H1 (cell line): ENCODE measurements at regions of chr4 and their contacts with region 1.

Region 1: DNA sequence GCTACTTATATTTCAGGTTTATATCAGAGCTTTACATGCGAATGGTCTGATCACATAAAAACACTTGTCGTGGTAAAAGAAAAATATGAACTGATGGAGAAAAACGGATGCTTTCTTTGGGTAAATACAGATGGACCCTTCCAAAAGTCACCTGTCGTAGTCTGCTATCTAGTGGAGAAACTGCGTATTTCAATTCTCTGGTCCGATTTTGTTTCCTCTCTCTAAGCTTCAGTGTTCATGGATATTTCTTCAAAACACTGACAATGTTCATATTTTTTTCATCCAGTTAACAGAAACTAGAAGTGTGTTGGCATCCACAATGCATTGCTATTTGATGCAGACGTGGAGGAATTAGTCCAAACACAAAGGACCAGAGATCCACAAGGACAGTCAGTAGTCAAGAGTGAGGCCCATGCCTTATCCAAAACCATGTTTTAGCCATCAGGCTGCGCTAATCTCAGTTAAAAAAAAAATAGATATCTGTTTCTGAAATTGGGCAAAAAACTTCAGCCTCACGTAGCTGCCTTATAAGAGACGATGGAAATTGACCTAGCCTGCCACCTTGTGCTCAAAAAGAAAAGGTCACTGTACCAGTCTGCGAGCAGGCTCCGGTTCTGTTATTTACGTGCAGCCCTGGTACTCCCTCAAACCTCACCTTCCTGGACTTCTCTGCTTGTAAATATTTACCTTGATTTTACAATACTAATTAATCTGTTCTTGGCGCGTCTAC is 16.0 kb downstream of the MEPE start:
- DNase-seq: no peak
- H3K4me3 ChIP-seq: peak overlapping the region in 1 of 4 experiments; percentile 46; a peak in 2 of 8 replicates
- H3K27ac ChIP-seq: no peak overlapping the region
- H3K4me1 ChIP-seq: peaks cover 0 to 12% (median 6%) of the 10 kb centered on the region in 4 experiments; a peak in 6 of 7 replicates
- H3K27me3 ChIP-seq: no peaks in the 10 kb centered on the region
- CTCF ChIP-seq: peak; percentile 38 to 69 (median 67)
- EP300 ChIP-seq: no peak
- POLR2A ChIP-seq: no peak
- RAD21 ChIP-seq: peak; percentile 77 to 82

Region 2: DNA sequence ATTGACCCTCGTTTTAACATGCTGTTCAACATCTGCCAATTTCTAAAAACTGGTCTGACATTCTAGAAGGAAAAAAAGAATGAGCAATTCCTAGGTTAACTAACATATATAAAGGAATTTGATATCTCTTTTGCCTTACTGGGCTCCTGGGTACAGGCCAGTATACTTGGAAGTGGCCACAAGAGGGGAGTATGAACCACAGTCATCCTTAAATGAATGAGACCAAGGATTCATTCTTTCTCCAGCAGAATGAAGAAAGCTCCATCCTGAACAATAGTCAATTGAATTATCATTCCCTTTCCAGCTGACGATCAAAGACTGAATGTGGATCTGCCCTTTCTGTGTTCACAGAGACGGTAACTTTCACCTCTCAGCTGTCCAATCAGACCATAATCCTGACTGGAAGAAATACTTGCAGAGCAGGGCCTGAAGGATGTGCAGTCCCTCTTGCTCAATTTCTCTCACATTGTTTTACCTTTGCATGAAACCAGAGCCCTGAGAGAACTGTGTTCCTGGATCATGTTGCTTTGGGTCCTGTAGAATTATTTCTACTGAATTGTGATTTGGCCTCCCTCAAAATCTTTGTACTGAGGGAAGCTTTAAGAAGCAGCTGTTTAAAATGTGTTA is 304.8 kb before region 1 on chr4:
- CTCF ChIA-PET with region 1: interaction called, 49 read pairs
- POLR2A ChIA-PET with region 1: no interaction called
- DNase-seq: no peak
- H3K4me3 ChIP-seq: no peak overlapping the region
- H3K27ac ChIP-seq: no peak overlapping the region
- H3K4me1 ChIP-seq: peaks cover 0 to 2% (median under 1%) of the 10 kb centered on the region in 4 experiments; a peak in 2 of 7 replicates
- H3K27me3 ChIP-seq: no peaks in the 10 kb centered on the region
- CTCF ChIP-seq: peak in 2 of 3 experiments; percentile 61 to 71; a peak in 3 of 4 replicates
- EP300 ChIP-seq: no peak
- POLR2A ChIP-seq: no peak
- RAD21 ChIP-seq: peak; percentile 78 to 86

Region 3: GRCh38 chr4:87799301-87800113 is 49.3 kb before region 1 on chr4 and contains the start of gene IBSP:
- CTCF ChIA-PET with region 1: no interaction called
- POLR2A ChIA-PET with region 1: no interaction called
- DNase-seq: no peak
- H3K4me3 ChIP-seq: no peak within 1 kb of the TSS
- H3K27ac ChIP-seq: no peak within 1 kb of the TSS
- H3K4me1 ChIP-seq: no peaks in the 10 kb centered on the region
- H3K27me3 ChIP-seq: no peaks in the 10 kb centered on the region
- CTCF ChIP-seq: no peak
- EP300 ChIP-seq: no peak
- POLR2A ChIP-seq: no peak
- RAD21 ChIP-seq: no peak
- total RNA-seq, gene IBSP: 0.21 TPM in 1 of 2 replicates, not detected in the other

Region 4: GRCh38 chr4:87819281-87819919 is 29.4 kb before region 1 on chr4:
- CTCF ChIA-PET with region 1: interaction called, 16 read pairs
- POLR2A ChIA-PET with region 1: no interaction called
- DNase-seq: no peak
- H3K4me3 ChIP-seq: no peak overlapping the region
- H3K27ac ChIP-seq: peak overlapping the region; percentile 36; the same call in 1 of the 2 replicates
- H3K4me1 ChIP-seq: peaks cover 0 to 3% (median 2%) of the 10 kb centered on the region in 4 experiments; a peak in 3 of 7 replicates
- H3K27me3 ChIP-seq: no peaks in the 10 kb centered on the region; a peak in 1 of 7 replicates
- CTCF ChIP-seq: no peak
- EP300 ChIP-seq: peak in 1 of 2 experiments; percentile 34; a peak in 1 of 3 replicates
- POLR2A ChIP-seq: no peak
- RAD21 ChIP-seq: no peak

Region 5: GRCh38 chr4:87882321-87882720 is 33.5 kb after region 1 on chr4:
- CTCF ChIA-PET with region 1: no interaction called
- POLR2A ChIA-PET with region 1: no interaction called
- DNase-seq: no peak
- H3K4me3 ChIP-seq: no peak overlapping the region
- H3K27ac ChIP-seq: no peak overlapping the region
- H3K4me1 ChIP-seq: no peaks in the 10 kb centered on the region
- H3K27me3 ChIP-seq: no peaks in the 10 kb centered on the region
- CTCF ChIP-seq: no peak
- EP300 ChIP-seq: no peak
- POLR2A ChIP-seq: no peak
- RAD21 ChIP-seq: no peak

Region 6: GRCh38 chr4:87901422-87901992 is 52.7 kb after region 1 on chr4:
- CTCF ChIA-PET with region 1: interaction called, 17 read pairs
- POLR2A ChIA-PET with region 1: no interaction called
- DNase-seq: no peak
- H3K4me3 ChIP-seq: no peak overlapping the region
- H3K27ac ChIP-seq: no peak overlapping the region
- H3K4me1 ChIP-seq: peaks cover 0 to 3% (median 2%) of the 10 kb centered on the region in 4 experiments; a peak in 3 of 7 replicates
- H3K27me3 ChIP-seq: no peaks in the 10 kb centered on the region
- CTCF ChIP-seq: no peak
- EP300 ChIP-seq: no peak
- POLR2A ChIP-seq: no peak
- RAD21 ChIP-seq: no peak

Region 7: GRCh38 chr4:87961993-87962392 is 113.2 kb after region 1 on chr4:
- CTCF ChIA-PET with region 1: interaction called, 28 read pairs
- POLR2A ChIA-PET with region 1: no interaction called
- DNase-seq: no peak
- H3K4me3 ChIP-seq: no peak overlapping the region
- H3K27ac ChIP-seq: no peak overlapping the region
- H3K4me1 ChIP-seq: peaks cover 0 to 4% (median 2%) of the 10 kb centered on the region in 4 experiments; a peak in 2 of 7 replicates
- H3K27me3 ChIP-seq: no peaks in the 10 kb centered on the region; a peak in 1 of 7 replicates
- CTCF ChIP-seq: no peak
- EP300 ChIP-seq: no peak
- POLR2A ChIP-seq: no peak
- RAD21 ChIP-seq: no peak

Region 8: GRCh38 chr4:87985097-87985886 is 136.5 kb after region 1 on chr4:
- CTCF ChIA-PET with region 1: interaction called, 12 read pairs
- POLR2A ChIA-PET with region 1: no interaction called
- DNase-seq: peak in 1 of 2 experiments; percentile 74
- H3K4me3 ChIP-seq: no peak overlapping the region
- H3K27ac ChIP-seq: no peak overlapping the region
- H3K4me1 ChIP-seq: peaks cover 0 to 5% (median under 1%) of the 10 kb centered on the region in 4 experiments; a peak in 3 of 7 replicates
- H3K27me3 ChIP-seq: no peaks in the 10 kb centered on the region
- CTCF ChIP-seq: peak; percentile 84 to 97 (median 93)
- EP300 ChIP-seq: no peak
- POLR2A ChIP-seq: no peak
- RAD21 ChIP-seq: peak; percentile 88 to 93